ENCODE measurements at regions of chr2 and their contacts with region 1.

Region 1: GRCh38 chr2:148509288-148509902 is 135.2 kb upstream of the EPC2 start:
- DNase-seq: peak; percentile 73
- ATAC-seq: peak; percentile 100
- H3K4me3 ChIP-seq: peak overlapping the region; percentile 38 to 55
- H3K27ac ChIP-seq: no peak overlapping the region
- H3K4me1 ChIP-seq: peaks cover 3% of the 10 kb centered on the region
- H3K27me3 ChIP-seq: no peaks in the 10 kb centered on the region
- CTCF ChIP-seq: peak; percentile 96

Region 2: GRCh38 chr2:147937744-147938349 is 571.5 kb before region 1 on chr2:
- CTCF ChIA-PET with region 1: interaction called, 3 read pairs
- POLR2A ChIA-PET with region 1: no interaction called
- in situ Hi-C with region 1: no loop called
- intact Hi-C with region 1: loop called (anchors 1 kb)
- DNase-seq: peak; percentile 15
- ATAC-seq: no peak
- H3K4me3 ChIP-seq: no peak overlapping the region
- H3K27ac ChIP-seq: no peak overlapping the region
- H3K4me1 ChIP-seq: no peaks in the 10 kb centered on the region
- H3K27me3 ChIP-seq: no peaks in the 10 kb centered on the region
- CTCF ChIP-seq: peak; percentile 79; the same call in 1 of the 2 replicates

Region 3: GRCh38 chr2:148238561-148238960 is 270.8 kb before region 1 on chr2:
- CTCF ChIA-PET with region 1: no interaction called
- POLR2A ChIA-PET with region 1: no interaction called
- in situ Hi-C with region 1: no loop called
- intact Hi-C with region 1: no loop called
- DNase-seq: no peak
- ATAC-seq: no peak
- H3K4me3 ChIP-seq: no peak overlapping the region
- H3K27ac ChIP-seq: no peak overlapping the region
- H3K4me1 ChIP-seq: no peaks in the 10 kb centered on the region
- H3K27me3 ChIP-seq: no peaks in the 10 kb centered on the region
- CTCF ChIP-seq: no peak